Heart left ventricle (tissue), 16 donors: ENCODE measurements at regions of chr16 and their contacts with region 1.

Region 1: GRCh38 chr16:15457958-15458357 is 23.6 kb downstream of the BMERB1 start:
- DNase-seq: no peak
- ATAC-seq: peak in 1 of 4 donors; percentile 38
- H3K4me3 ChIP-seq: no peak overlapping the region
- H3K27ac ChIP-seq: no peak overlapping the region
- H3K4me1 ChIP-seq: peaks cover 0 to 4% (median 0%) of the 10 kb centered on the region in 12 donors
- H3K27me3 ChIP-seq: no peaks in the 10 kb centered on the region
- CTCF ChIP-seq: no peak
- POLR2A ChIP-seq: no peak

Region 2: GRCh38 chr16:15529673-15530072 is 71.7 kb after region 1 on chr16:
- intact Hi-C with region 1: no loop called
- DNase-seq: no peak
- ATAC-seq: peak in 1 of 4 donors; percentile 18
- H3K4me3 ChIP-seq: no peak overlapping the region
- H3K27ac ChIP-seq: no peak overlapping the region
- H3K4me1 ChIP-seq: no peaks in the 10 kb centered on the region
- H3K27me3 ChIP-seq: no peaks in the 10 kb centered on the region
- CTCF ChIP-seq: no peak
- POLR2A ChIP-seq: no peak

Region 3: DNA sequence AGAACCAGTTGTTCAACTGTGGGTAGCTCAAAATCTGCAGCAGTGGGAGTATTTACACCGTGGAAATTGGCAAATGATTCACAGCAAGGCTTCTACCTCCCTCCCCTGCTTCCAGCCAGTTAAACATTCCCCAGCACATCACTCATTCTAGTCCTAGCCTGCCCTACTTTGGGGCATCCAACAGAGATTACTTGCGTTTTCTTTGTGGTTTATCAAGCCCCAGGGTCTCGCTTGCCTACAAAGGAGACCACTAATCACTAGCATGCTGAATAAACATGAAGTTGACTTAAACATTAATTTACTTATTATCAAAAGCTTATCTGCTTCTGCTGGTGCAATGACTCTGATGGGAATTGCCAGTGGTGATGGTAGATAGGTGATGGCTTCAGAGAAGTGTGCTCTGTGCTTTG is 90.5 kb after region 1 on chr16:
- intact Hi-C with region 1: loop called in 1 of 10 experiments (anchors 10 kb)
- DNase-seq: no peak
- ATAC-seq: no peak
- H3K4me3 ChIP-seq: no peak overlapping the region
- H3K27ac ChIP-seq: no peak overlapping the region
- H3K4me1 ChIP-seq: peaks cover 0 to 12% (median 2%) of the 10 kb centered on the region in 12 donors
- H3K27me3 ChIP-seq: no peaks in the 10 kb centered on the region
- CTCF ChIP-seq: no peak
- POLR2A ChIP-seq: no peak